Naive thymus-derived CD4-positive, alpha-beta T cell (primary cell): ENCODE measurements at regions of chr10 and their contacts with region 1.

Region 1: DNA sequence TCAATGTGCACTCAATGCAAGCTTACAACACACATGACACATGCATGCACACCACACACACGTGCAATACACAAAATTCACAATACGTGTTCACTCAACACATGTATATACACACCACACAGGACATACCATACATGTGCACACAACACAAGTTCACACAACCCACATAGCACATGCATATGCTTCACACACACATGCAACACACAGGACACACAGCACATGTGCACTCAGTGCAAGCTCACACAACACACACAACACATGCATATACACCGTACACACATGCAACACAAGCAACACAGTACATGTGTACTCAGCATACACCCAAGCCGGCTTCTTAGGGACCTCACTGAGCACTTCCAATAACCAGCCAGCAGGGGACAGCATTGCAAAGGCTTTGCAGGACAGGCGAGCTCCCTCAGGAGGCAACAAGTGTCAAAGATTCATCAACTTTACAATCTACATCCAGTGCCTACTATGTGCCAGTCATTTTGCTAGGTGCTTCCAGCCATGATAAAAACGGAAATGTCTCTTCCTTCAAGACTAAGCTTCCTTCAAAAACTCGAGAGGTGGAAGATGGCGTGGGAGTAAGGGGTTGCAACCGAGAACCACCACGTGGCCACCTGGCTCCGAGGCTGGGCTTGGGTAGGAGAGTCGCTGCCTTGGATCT is 61.1 kb downstream of the JCAD start:
- DNase-seq: peak; percentile 45 to 81 (median 72)
- ATAC-seq: peak; percentile 86
- H3K4me3 ChIP-seq: no peak overlapping the region
- H3K4me3 Mint-ChIP-seq: no peak overlapping the region
- H3K27ac ChIP-seq: no peak overlapping the region
- H3K27ac Mint-ChIP-seq: peak overlapping the region in 1 of 9 donors; percentile 16
- H3K4me1 ChIP-seq: peaks cover 0 to 4% of the 10 kb centered on the region in 2 donors
- H3K4me1 Mint-ChIP-seq: peaks cover 5 to 16% (median 11%) of the 10 kb centered on the region in 7 donors
- H3K27me3 ChIP-seq: no peaks in the 10 kb centered on the region
- H3K27me3 Mint-ChIP-seq: peaks cover 55 to 79% (median 62%) of the 10 kb centered on the region in 5 donors

Region 2: GRCh38 chr10:29386342-29386999 is 611.8 kb before region 1 on chr10:
- CTCF ChIA-PET with region 1: no interaction called
- POLR2A ChIA-PET with region 1: no interaction called
- intact Hi-C with region 1: loop called in 1 of 2 experiments (anchors 2 kb)
- DNase-seq: peak in 6 of 9 donors; percentile 5 to 40 (median 35)
- ATAC-seq: peak; percentile 67
- H3K4me3 ChIP-seq: no peak overlapping the region
- H3K4me3 Mint-ChIP-seq: no peak overlapping the region
- H3K27ac ChIP-seq: no peak overlapping the region
- H3K27ac Mint-ChIP-seq: no peak overlapping the region
- H3K4me1 ChIP-seq: no peaks in the 10 kb centered on the region
- H3K4me1 Mint-ChIP-seq: peaks cover 0 to 6% (median 0%) of the 10 kb centered on the region in 7 donors
- H3K27me3 ChIP-seq: peaks cover 0 to 3% of the 10 kb centered on the region in 2 donors
- H3K27me3 Mint-ChIP-seq: peaks cover 0 to 13% (median 5%) of the 10 kb centered on the region in 5 donors

Region 3: GRCh38 chr10:30027057-30028005 is 29.1 kb after region 1 on chr10:
- CTCF ChIA-PET with region 1: interaction called, 3 read pairs
- POLR2A ChIA-PET with region 1: no interaction called
- intact Hi-C with region 1: loop called (anchors 1 kb)
- DNase-seq: peak; percentile 63 to 98 (median 95)
- ATAC-seq: peak; percentile 97
- H3K4me3 ChIP-seq: peak overlapping the region; percentile 50
- H3K4me3 Mint-ChIP-seq: peak overlapping the region; percentile 63 to 94 (median 82)
- H3K27ac ChIP-seq: no peak overlapping the region
- H3K27ac Mint-ChIP-seq: peak overlapping the region; percentile 75 to 98 (median 93)
- H3K4me1 ChIP-seq: peaks cover 27 to 29% of the 10 kb centered on the region in 2 donors
- H3K4me1 Mint-ChIP-seq: peaks cover 24 to 58% (median 40%) of the 10 kb centered on the region in 7 donors
- H3K27me3 ChIP-seq: peaks cover 8% of the 10 kb centered on the region in 2 donors
- H3K27me3 Mint-ChIP-seq: peaks cover 34 to 65% (median 53%) of the 10 kb centered on the region in 5 donors

Region 4: DNA sequence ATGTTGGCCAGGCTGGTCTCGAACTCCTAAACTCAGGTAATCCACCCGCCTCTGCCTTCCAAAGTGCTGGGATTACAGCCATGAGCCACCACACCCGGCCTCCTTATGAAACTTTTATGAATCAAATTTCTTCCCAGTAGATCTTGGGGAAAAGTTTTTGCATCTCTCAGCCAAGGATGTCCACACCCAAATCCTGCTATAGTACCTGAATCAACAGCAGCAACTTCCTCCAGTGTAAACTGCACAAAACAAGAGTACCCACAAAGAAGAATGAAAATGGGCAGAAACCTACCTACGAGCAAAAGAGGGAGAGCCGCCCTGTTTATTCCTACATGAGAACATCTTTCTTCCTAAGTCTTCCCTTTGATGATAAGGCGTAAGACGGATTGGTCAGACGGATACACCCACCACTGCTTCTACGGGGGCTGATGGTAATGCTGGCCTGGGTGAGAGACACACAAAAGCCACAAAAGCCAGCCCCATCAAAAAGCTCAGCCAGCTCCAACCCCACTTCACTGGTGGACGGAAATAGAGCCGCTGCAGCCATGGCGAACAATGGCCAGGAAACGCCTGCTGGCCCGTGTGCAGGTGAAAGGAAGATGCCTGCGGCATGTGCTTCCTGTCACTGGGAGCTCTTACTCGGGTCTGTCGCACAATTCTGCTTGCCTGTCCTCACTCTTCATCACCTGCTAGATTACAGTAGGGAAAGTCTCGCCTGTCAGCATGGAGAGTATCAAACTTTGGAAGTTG is 50.7 kb after region 1 on chr10:
- CTCF ChIA-PET with region 1: no interaction called
- POLR2A ChIA-PET with region 1: no interaction called
- intact Hi-C with region 1: no loop called
- DNase-seq: no peak
- ATAC-seq: peak; percentile 30
- H3K4me3 ChIP-seq: peak overlapping the region; percentile 19
- H3K4me3 Mint-ChIP-seq: peak overlapping the region; percentile 45 to 81 (median 74)
- H3K27ac ChIP-seq: no peak overlapping the region
- H3K27ac Mint-ChIP-seq: peak overlapping the region in 2 of 9 donors; percentile 6 to 44
- H3K4me1 ChIP-seq: peaks cover 0 to 17% of the 10 kb centered on the region in 2 donors
- H3K4me1 Mint-ChIP-seq: peaks cover 13 to 31% (median 23%) of the 10 kb centered on the region in 7 donors
- H3K27me3 ChIP-seq: peaks cover 0 to 13% of the 10 kb centered on the region in 2 donors
- H3K27me3 Mint-ChIP-seq: peaks cover 63 to 90% (median 83%) of the 10 kb centered on the region in 5 donors

Region 5: DNA sequence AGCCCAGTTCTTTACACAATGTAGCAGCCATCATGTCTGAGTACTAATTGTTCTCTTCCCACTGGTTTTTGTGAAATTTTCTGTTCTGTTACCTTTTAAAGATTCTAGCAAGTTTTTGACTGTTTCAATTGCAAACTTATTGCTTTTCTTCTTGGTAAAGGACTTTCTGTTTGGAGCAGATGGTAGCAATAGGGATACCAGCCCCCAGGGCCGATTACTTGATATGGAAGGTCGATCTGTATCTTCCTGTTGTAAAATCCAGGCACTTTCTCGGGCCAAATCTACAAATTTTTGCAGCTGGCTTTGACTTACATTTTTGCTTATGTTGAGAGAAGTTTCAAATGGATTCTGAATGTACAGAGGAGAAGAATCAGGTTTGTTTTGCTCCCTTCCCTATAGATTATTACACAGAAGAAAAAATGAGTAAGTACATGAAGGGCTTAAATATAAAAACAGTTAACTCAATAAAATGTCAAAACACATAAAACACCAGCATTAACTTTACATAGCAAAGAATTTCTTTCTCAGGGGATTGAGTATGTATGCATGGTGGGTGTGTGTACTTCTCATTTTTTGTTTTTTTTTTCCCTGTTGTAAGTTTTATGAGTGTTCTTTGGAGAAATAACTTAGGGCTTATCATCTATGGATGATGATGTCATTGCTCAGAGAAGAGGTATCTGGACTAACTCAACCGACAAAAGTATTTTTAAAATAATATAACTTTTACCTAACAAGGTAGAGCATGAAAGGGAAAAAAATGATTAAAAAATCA is 315.5 kb after region 1 on chr10:
- CTCF ChIA-PET with region 1: no interaction called
- POLR2A ChIA-PET with region 1: no interaction called
- intact Hi-C with region 1: loop called in 1 of 2 experiments (anchors 10 kb)
- DNase-seq: no peak
- ATAC-seq: no peak
- H3K4me3 ChIP-seq: no peak overlapping the region
- H3K4me3 Mint-ChIP-seq: no peak overlapping the region
- H3K27ac ChIP-seq: no peak overlapping the region
- H3K27ac Mint-ChIP-seq: peak overlapping the region in 1 of 9 donors; percentile 31
- H3K4me1 ChIP-seq: no peaks in the 10 kb centered on the region
- H3K4me1 Mint-ChIP-seq: peaks cover 0 to 13% (median 7%) of the 10 kb centered on the region in 7 donors
- H3K27me3 ChIP-seq: no peaks in the 10 kb centered on the region
- H3K27me3 Mint-ChIP-seq: no peaks in the 10 kb centered on the region

Region 6: DNA sequence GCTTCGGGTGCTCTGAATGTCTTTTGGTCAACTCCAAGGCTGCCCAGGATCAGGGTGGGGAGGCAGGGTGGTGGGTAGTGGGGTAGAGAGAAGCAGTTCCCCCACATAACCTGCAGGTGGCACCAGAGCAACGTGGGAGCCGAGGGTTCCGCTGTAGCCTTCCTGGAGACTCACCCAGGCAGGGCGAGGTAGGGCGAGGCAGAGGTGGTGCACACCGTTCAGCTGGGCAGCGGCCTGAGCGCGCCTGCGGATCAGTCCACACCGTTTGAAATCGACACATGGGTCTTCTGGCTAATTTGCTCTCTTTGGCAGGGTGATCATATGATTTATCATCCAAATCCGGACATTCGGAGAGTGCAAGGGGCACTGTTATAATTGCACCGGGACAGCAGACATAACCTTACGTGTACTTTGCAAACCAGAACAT is 394.3 kb after region 1 on chr10:
- CTCF ChIA-PET with region 1: interaction called, 6 read pairs
- POLR2A ChIA-PET with region 1: no interaction called
- intact Hi-C with region 1: loop called in 1 of 2 experiments (anchors 5 kb)
- DNase-seq: peak; percentile 45 to 80 (median 66)
- ATAC-seq: peak; percentile 99
- H3K4me3 ChIP-seq: no peak overlapping the region
- H3K4me3 Mint-ChIP-seq: peak overlapping the region in 2 of 10 donors; percentile 18 to 57
- H3K27ac ChIP-seq: no peak overlapping the region
- H3K27ac Mint-ChIP-seq: peak overlapping the region in 1 of 9 donors; percentile 47
- H3K4me1 ChIP-seq: peaks cover 0 to 5% of the 10 kb centered on the region in 2 donors
- H3K4me1 Mint-ChIP-seq: peaks cover 0 to 4% (median 3%) of the 10 kb centered on the region in 7 donors
- H3K27me3 ChIP-seq: no peaks in the 10 kb centered on the region
- H3K27me3 Mint-ChIP-seq: peaks cover 0 to 42% (median 6%) of the 10 kb centered on the region in 5 donors

Region 7: GRCh38 chr10:30591249-30591670 is 593.0 kb after region 1 on chr10:
- CTCF ChIA-PET with region 1: interaction called, 18 read pairs
- POLR2A ChIA-PET with region 1: no interaction called
- intact Hi-C with region 1: loop called in 1 of 2 experiments (anchors 2 kb)
- DNase-seq: peak in 7 of 9 donors; percentile 23 to 61 (median 48)
- ATAC-seq: peak; percentile 80
- H3K4me3 ChIP-seq: no peak overlapping the region
- H3K4me3 Mint-ChIP-seq: no peak overlapping the region
- H3K27ac ChIP-seq: no peak overlapping the region
- H3K27ac Mint-ChIP-seq: no peak overlapping the region
- H3K4me1 ChIP-seq: no peaks in the 10 kb centered on the region
- H3K4me1 Mint-ChIP-seq: peaks cover 0 to 3% (median 0%) of the 10 kb centered on the region in 7 donors
- H3K27me3 ChIP-seq: no peaks in the 10 kb centered on the region
- H3K27me3 Mint-ChIP-seq: peaks cover 0 to 26% (median 13%) of the 10 kb centered on the region in 5 donors